ENCODE measurements at regions of chr13 and their contacts with region 1.

Region 1: DNA sequence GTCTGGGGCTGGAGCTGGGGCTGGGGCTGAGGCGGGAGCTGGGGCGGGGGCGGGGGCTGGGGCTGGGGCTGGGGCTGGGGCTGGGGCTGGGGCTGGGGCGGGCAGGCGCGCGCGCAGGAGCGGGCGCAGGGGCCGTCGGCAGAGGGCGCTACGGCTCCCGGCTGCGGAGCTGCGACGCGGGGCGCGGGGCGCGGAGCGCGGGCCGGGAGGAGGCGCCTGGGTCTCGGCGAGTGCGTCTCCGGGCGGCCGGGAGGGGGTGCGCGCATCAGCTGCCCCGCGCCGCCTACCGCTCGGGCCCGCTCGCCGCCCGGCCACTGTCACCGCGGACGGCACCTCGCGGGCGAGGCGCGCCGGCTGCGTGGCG is 422 bp upstream of the MTUS2 start:
- DNase-seq: no peak
- H3K4me3 ChIP-seq: peak overlapping the region; percentile 20
- H3K27me3 ChIP-seq: peaks cover 15% of the 10 kb centered on the region
- CTCF ChIP-seq: no peak

Region 2: DNA sequence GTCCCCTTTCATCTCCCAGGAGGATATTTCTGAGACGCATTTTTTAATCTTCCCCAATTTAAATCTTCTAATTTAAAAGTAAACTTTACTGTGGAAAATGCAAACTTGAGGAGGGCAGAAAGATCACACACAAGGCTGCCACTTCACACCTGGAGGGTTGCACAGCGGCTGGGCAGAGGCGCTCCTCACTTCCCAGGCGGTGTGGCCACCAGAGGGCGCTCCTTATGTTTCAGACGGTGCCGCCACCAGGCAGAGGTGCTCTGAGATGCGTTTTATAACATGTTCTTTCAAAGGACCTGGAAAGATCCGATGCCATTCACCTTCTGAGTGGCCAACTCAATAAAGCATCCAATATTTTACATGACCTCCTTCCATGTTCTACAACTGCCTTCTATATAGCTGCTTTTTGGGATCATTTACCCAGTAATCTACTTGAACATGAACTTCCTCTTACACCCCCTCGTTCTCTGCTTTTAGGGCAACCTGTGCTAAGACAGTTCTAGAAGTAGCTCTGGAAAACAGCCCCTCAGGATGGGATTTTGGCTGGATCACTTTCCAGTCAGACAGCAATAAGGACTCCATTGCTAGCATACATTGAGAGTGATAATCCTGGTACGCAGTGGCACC is 14.4 kb before region 1 on chr13:
- CTCF ChIA-PET with region 1: interaction called, 11 read pairs
- POLR2A ChIA-PET with region 1: no interaction called
- DNase-seq: no peak
- H3K4me3 ChIP-seq: no peak overlapping the region
- H3K27me3 ChIP-seq: peaks cover 3% of the 10 kb centered on the region
- CTCF ChIP-seq: peak; percentile 43

Region 3: GRCh38 chr13:28935104-28935503 is 115.4 kb after region 1 on chr13:
- CTCF ChIA-PET with region 1: no interaction called
- POLR2A ChIA-PET with region 1: no interaction called
- DNase-seq: no peak
- H3K4me3 ChIP-seq: no peak overlapping the region
- H3K27me3 ChIP-seq: no peaks in the 10 kb centered on the region
- CTCF ChIP-seq: no peak

Measured in BJ (cell line).